Left cardiac atrium (tissue), 4 donors: ENCODE measurements at regions of chr1 and their contacts with region 1.

Region 1: GRCh38 chr1:27300341-27301051 is 21.5 kb upstream of the TMEM222 start:
- DNase-seq: peak; percentile 83
- ATAC-seq: peak; percentile 84 to 87

Region 2: GRCh38 chr1:27349784-27350662 is 49.5 kb after region 1 on chr1:
- intact Hi-C with region 1: loop called in 1 of 2 experiments (anchors 5 kb)
- DNase-seq: peak; percentile 75
- ATAC-seq: peak; percentile 80 to 83

Region 3: GRCh38 chr1:27392096-27392777 is 91.7 kb after region 1 on chr1 and contains the start of gene GPR3:
- intact Hi-C with region 1: loop called (anchors 2 to 5 kb)
- DNase-seq: peak; percentile 95
- ATAC-seq: peak; percentile 94
- total RNA-seq, gene GPR3: 1.7 to 12.4 TPM

Region 4: GRCh38 chr1:27671964-27672749 is 371.7 kb after region 1 on chr1 and contains the start of gene IFI6:
- intact Hi-C with region 1: loop called in 1 of 2 experiments (anchors 5 kb)
- DNase-seq: peak; percentile 88
- ATAC-seq: peak; percentile 98
- total RNA-seq, gene IFI6: 40.6 to 143 TPM

Region 5: GRCh38 chr1:27772933-27773825 is 472.7 kb after region 1 on chr1 and contains the start of gene STX12:
- intact Hi-C with region 1: no loop called
- DNase-seq: peak; percentile 99
- ATAC-seq: peak; percentile 98 to 99
- total RNA-seq, gene STX12: 30.5 to 46.6 TPM